ENCODE measurements at regions of chr10 and their contacts with region 1.

Region 1: GRCh38 chr10:78691271-78692008 is 377.3 kb upstream of the ZMIZ1 start:
- DNase-seq: no peak
- H3K4me3 ChIP-seq: no peak overlapping the region
- H3K27ac ChIP-seq: peak overlapping the region in 1 of 5 donors; percentile 1
- H3K4me1 ChIP-seq: no peaks in the 10 kb centered on the region
- H3K27me3 ChIP-seq: no peaks in the 10 kb centered on the region
- CTCF ChIP-seq: no peak
- POLR2A ChIP-seq: no peak

Region 2: DNA sequence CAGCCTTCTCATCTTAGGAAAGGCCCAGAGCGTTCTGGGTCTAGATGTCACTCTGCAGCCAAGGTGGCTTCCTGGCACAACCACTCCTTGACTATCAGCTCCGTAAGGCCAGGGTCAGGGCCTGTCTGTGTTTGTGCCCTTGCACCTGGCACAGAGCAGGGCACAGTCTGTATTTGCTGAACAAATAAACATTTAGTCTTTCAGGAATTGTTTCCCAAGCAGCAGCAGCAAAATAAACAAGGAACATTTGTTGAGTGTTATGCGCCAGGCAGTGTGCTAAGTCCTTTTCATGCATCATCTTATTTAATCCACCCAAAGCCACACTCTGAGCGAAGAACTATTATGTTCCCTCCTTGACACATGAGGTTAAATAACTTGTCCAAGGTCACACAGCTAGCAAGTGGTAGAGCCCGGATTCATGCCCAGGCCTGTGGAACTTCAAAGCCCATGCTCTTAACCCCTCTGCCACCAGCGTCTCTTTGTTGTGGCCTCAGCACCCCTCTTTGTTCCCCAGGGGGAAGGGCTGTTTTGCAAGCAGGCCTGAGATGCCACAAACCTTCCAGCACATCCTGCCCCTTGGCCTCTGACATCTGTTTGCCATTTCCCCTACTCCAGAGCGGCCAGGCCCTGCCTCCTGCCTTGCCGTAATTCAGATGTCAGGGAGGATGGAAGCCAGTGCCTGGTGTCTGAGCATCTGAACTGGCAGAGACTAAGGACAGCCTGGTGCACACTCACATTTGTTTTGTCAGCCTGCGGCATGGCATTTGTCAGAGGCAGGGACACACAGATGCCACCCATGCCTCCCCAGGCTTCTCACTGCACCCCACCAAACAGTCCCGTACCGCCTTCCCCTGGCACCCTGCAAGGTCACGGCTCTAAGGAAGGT is 51.5 kb after region 1 on chr10:
- intact Hi-C with region 1: loop called in 1 of 2 experiments (anchors 5 kb)
- DNase-seq: peak in 3 of 7 donors; percentile 25 to 69 (median 26)
- H3K4me3 ChIP-seq: no peak overlapping the region
- H3K27ac ChIP-seq: peak overlapping the region in 2 of 5 donors; percentile 23 to 74
- H3K4me1 ChIP-seq: peaks cover 20 to 38% of the 10 kb centered on the region in 2 donors
- H3K27me3 ChIP-seq: no peaks in the 10 kb centered on the region
- CTCF ChIP-seq: no peak
- POLR2A ChIP-seq: no peak

Measured in adrenal gland (tissue), 19 donors.